PC-3 (cell line): ENCODE measurements at regions of chr2 and their contacts with region 1.

Region 1: GRCh38 chr2:6977113-6977741 is 60.0 kb downstream of the RNF144A start:
- DNase-seq: peak; percentile 87
- ATAC-seq: peak; percentile 60
- H3K4me3 ChIP-seq: peak overlapping the region; percentile 41
- H3K27ac ChIP-seq: peak overlapping the region; percentile 98
- H3K4me1 ChIP-seq: peaks cover 59% of the 10 kb centered on the region
- H3K27me3 ChIP-seq: no peaks in the 10 kb centered on the region
- CTCF ChIP-seq: no peak

Region 2: DNA sequence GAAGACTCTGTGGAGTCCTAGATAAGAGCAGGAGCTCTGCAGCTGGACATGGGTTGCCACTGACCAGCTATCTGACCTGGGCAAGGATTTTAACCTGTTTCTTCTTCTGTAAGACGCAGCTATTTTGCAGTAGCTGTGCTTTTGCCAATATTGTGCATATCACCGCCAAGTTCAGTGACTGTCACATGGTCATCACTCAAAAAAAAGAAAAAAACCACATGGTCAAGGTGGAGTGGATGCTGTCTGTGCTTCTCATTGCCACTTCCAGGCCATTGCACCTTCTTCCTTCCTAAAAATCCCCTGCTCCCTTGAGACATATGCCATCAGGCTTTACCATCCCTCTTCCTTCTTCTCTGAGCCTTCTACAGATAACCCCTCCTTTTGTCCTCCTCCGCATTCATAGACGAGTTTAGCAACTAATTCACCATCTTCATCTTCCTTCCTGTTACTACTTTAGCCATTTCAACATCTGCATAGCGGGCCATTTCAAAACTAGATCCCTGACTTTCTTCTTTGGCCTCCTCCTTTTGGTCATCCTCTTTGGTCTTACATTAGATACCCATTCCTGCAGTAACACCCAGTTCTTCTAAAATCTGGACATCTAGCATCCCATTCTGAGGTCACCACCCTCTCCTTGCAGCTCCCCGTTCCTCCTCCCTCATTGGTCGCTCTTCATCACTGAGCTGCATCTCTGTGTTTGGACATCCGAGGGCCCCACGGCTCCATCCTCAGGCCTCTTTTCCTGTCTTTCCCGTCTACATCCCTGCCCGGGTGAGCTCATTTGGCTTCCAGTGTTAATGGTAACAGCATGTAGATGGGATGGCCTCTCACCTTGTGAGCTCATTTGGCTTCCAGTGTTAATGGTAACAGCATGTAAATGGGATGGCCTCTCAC is 42.2 kb before region 1 on chr2:
- CTCF ChIA-PET with region 1: no interaction called
- POLR2A ChIA-PET with region 1: no interaction called
- intact Hi-C with region 1: loop called (anchors 5 kb)
- DNase-seq: no peak
- ATAC-seq: no peak
- H3K4me3 ChIP-seq: no peak overlapping the region
- H3K27ac ChIP-seq: no peak overlapping the region
- H3K4me1 ChIP-seq: no peaks in the 10 kb centered on the region
- H3K27me3 ChIP-seq: no peaks in the 10 kb centered on the region
- CTCF ChIP-seq: no peak

Region 3: GRCh38 chr2:6946722-6947121 is 30.5 kb before region 1 on chr2:
- CTCF ChIA-PET with region 1: no interaction called
- POLR2A ChIA-PET with region 1: no interaction called
- intact Hi-C with region 1: loop called (anchors 1 kb)
- DNase-seq: peak; percentile 91
- ATAC-seq: peak; percentile 96
- H3K4me3 ChIP-seq: peak overlapping the region; percentile 26; the same call in 1 of the 2 replicates
- H3K27ac ChIP-seq: peak overlapping the region; percentile 88
- H3K4me1 ChIP-seq: peaks cover 20% of the 10 kb centered on the region
- H3K27me3 ChIP-seq: no peaks in the 10 kb centered on the region
- CTCF ChIP-seq: no peak

Region 4: GRCh38 chr2:6994536-6995128 is 17.4 kb after region 1 on chr2:
- CTCF ChIA-PET with region 1: no interaction called
- POLR2A ChIA-PET with region 1: no interaction called
- intact Hi-C with region 1: loop called (anchors 1 kb)
- DNase-seq: no peak
- ATAC-seq: no peak; the same call in 1 of the 2 replicates
- H3K4me3 ChIP-seq: no peak overlapping the region
- H3K27ac ChIP-seq: peak overlapping the region; percentile 24; the same call in 1 of the 2 replicates
- H3K4me1 ChIP-seq: peaks cover 10% of the 10 kb centered on the region; the same call in 1 of the 2 replicates
- H3K27me3 ChIP-seq: no peaks in the 10 kb centered on the region
- CTCF ChIP-seq: no peak

Region 5: DNA sequence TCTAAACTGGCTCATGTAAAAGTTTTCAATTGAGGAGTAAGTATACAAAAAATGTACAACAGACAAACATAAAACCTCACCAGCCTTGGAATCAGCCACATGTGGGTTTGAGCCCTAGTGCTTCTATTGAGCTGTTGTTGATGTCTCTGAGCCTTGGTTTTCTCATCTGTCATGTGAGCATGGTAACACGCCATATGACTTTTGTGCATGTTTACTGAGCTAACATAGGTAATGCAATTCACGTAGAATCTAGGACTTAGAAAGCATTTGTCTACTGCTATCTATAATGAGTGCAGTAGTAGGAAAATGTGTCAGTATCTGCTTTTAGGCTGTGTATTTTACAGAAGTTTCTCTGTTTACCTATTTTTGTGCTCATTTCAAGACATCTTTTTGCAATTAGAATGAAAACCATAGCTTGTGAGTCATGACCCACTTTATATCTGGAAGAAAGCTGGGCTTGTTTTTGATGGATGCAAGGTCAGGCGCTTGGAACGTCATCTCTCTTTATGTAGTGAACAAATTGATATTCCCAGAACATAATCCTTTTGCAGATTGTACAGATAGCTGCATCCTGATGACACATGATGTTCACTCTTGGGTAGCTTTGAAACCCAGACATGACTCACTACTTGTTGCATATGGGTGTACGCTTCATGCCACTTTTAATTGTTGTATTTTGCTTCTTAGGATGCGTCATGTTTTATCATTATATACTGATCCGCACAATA is 34.3 kb after region 1 on chr2:
- CTCF ChIA-PET with region 1: interaction called, 3 read pairs
- POLR2A ChIA-PET with region 1: no interaction called
- intact Hi-C with region 1: loop called (anchors 1 kb)
- DNase-seq: peak; percentile 96
- ATAC-seq: peak; percentile 71
- H3K4me3 ChIP-seq: no peak overlapping the region
- H3K27ac ChIP-seq: peak overlapping the region; percentile 99
- H3K4me1 ChIP-seq: peaks cover 77% of the 10 kb centered on the region
- H3K27me3 ChIP-seq: no peaks in the 10 kb centered on the region
- CTCF ChIP-seq: no peak

Region 6: DNA sequence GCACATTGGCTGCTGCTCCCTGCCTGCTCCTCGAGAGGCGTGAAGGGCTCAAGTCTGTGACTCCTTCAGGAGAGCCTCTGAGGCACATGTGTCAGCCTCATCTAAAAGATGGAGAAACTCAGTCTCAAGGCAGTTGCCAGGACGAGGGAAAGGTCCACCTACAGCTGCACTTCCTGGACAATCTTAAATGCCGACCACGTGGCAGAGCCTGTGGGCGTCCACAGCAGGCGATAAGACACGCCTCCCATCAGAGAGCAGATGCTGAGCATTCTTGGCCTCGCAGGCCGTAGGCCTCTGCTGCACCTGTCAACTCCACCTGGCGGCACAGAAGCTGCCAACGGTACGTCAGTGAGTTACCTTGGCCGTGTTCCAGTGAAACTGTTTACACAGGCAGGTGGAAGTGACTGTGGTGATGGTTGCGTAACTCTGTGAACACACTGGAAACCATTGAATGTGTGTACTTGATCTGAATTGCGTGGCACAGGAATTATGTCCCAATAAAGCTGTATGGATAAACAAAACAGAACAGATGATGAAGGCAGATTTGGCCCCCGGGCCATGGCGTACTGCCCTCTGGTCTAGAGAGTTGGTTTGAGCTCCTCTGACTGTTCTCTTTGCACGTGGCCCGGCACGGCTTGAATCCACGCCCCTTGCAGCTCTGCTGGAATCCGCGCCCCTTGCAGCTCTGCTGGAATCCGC is 54.5 kb after region 1 on chr2:
- CTCF ChIA-PET with region 1: interaction called, 5 read pairs
- POLR2A ChIA-PET with region 1: no interaction called
- intact Hi-C with region 1: loop called (anchors 1 kb)
- DNase-seq: peak; percentile 100
- ATAC-seq: peak; percentile 86
- H3K4me3 ChIP-seq: no peak overlapping the region
- H3K27ac ChIP-seq: peak overlapping the region; percentile 59
- H3K4me1 ChIP-seq: peaks cover 16% of the 10 kb centered on the region
- H3K27me3 ChIP-seq: no peaks in the 10 kb centered on the region
- CTCF ChIP-seq: peak; percentile 48; the same call in 1 of the 2 replicates